Ascending aorta (tissue), 2 donors: ENCODE measurements at regions of chr1 and their contacts with region 1.

Region 1: DNA sequence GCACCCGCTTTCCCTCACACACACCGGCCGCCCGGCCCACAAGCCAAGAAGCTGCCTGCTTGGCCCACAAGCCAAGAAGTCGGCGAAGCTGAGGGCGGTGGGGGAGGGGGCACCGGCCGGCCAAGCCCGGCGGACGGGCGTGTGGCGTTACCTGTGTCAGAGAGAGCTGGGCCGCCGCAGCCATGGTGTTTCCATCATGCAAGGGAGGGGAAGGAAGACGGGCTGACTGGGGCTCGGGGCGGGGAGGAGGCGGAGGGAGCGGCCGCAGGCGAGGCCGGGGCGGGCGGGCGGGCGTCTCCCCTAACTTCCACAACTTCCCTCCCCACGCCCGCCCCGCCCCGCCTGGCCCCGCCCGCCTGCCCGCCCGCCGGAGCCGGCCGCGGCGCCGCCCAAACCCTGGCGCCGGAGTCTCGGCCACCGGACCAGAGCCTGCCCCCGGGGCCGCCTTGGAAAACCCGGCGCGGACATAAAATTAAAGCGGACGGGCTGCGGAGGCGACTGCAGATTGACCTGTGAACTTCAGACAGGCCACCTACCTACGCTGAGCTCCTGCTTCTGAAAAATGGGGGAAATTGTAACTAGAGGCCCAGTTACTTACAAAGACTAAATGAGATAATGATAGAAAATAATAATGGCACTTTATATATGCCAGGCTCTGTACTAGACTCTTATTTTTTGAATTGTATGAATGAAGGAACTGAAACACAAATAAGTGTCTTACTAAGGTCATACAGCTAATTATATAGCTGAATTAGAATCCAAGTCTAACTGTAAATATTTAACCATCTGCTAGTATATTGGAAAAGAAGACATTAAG is at the start of gene EPS15:
- DNase-seq: peak; percentile 55 to 91
- H3K4me3 ChIP-seq: peak within 1 kb of the TSS; percentile 95 to 98
- H3K27ac ChIP-seq: peak within 1 kb of the TSS; percentile 86 to 93
- H3K4me1 ChIP-seq: peaks cover 3 to 16% of the 10 kb centered on the region in 2 donors
- H3K27me3 ChIP-seq: no peaks in the 10 kb centered on the region
- CTCF ChIP-seq: no peak
- total RNA-seq, gene EPS15: 44.6 TPM

Region 2: GRCh38 chr1:51421964-51422363 is 97.3 kb before region 1 on chr1:
- intact Hi-C with region 1: loop called (anchors 5 kb)
- DNase-seq: no peak
- H3K4me3 ChIP-seq: peak overlapping the region; percentile 31 to 36
- H3K27ac ChIP-seq: peak overlapping the region; percentile 44 to 50
- H3K4me1 ChIP-seq: peaks cover 0 to 21% of the 10 kb centered on the region in 2 donors
- H3K27me3 ChIP-seq: no peaks in the 10 kb centered on the region
- CTCF ChIP-seq: no peak

Region 3: DNA sequence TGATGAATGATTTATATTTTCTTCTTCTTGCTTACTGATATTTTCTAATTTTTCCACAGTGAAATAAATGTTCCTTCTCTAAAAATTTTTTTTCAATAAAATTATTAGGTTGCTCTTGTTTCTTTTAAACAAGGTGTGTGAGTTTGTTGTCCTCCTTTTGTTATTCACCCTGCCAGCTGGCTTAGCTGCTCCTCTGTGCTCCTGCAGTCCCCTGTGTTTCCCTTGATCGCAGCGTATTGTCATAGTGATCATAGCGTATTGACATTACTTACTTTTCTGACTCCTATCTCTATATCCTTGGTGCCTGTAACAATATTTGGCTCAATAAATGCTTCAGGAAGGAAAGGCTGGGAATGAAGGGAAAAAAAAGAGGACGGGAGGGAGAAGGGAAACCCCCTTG is 1517.9 kb after region 1 on chr1:
- intact Hi-C with region 1: no loop called
- DNase-seq: no peak
- H3K4me3 ChIP-seq: no peak overlapping the region
- H3K27ac ChIP-seq: no peak overlapping the region
- H3K4me1 ChIP-seq: no peaks in the 10 kb centered on the region
- H3K27me3 ChIP-seq: no peaks in the 10 kb centered on the region
- CTCF ChIP-seq: no peak